ENCODE measurements at regions of chr7 and their contacts with region 1.

Region 1: DNA sequence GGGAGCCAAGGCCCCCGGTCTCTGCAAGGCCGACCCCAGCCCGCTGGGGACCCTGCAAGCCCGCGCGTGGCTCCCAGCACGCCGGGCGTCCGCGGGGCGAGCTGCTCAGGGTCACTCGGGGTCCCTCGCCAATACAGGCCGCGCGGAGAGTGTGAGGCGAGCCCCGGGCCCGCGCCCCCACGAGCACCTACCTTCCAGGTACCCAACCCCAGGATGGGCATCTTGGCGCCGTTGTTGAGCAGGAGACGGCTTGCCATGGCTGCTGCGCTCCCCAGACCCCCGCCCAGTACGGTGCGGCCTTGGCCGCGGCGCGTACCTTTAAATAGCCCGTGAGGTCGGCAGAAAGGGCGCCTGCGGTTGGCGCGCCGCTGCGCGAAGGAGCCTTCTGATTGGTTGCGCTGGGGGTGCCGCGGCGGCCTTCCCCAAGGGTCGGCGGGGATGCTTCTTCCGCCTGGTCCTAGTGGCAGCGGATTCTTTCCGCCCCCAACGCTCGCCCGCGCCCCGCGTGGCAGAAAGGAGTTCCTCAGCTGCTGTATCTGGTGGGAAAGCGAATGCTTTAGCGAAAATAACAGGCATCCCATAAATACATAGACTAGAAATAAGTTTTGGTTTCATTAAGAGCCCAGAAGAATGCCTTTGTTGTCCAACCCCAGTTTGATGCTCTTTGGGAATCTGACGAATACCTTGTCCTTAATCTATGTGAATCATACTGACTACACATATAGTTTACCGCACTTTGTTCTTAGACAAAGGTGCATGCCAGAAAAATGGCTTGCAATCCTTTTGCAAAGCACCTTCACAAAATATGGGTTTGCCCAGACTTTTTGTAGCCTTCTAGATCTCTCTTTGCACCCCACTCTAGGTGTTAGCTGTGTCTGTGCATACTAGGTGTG is at the start of gene AKR1B1:
- DNase-seq: peak; percentile 64
- ATAC-seq: peak; percentile 97
- H3K4me3 ChIP-seq: peak within 1 kb of the TSS; percentile 75
- H3K27ac ChIP-seq: peak within 1 kb of the TSS; percentile 79
- H3K4me1 ChIP-seq: peaks cover 9% of the 10 kb centered on the region; the same call in 1 of the 2 replicates
- H3K27me3 ChIP-seq: no peaks in the 10 kb centered on the region
- CTCF ChIP-seq: peak; percentile 58 to 81 (median 78)
- EP300 ChIP-seq: no peak
- POLR2A ChIP-seq: peak; percentile 81
- RAD21 ChIP-seq: no peak
- polyA plus RNA-seq, gene AKR1B1: 165 to 180 TPM

Region 2: DNA sequence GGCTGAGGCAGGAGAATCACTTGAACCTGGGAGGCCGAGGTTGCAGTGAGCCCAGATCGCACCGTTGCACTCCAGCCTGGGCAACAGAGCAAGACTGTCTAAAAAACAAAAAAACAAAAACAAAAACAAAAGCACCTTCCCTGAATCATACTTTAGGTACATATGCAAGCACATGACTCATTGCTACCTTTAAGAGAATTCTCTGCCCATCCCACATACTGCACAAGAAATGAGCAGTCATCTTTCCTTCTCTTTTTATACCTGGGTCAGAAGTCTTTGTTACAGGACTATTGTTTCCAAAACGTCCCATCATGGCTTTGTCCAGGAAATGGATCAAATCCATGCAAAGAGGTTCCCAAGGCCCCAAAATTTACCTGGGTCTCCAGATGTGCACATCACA is 46.8 kb after region 1 on chr7:
- CTCF ChIA-PET with region 1: interaction called, 10 read pairs
- POLR2A ChIA-PET with region 1: no interaction called
- RAD21 ChIA-PET with region 1: no interaction called
- SMC1A ChIA-PET with region 1: no interaction called
- in situ Hi-C with region 1: no loop called
- intact Hi-C with region 1: no loop called
- DNase-seq: no peak
- ATAC-seq: no peak
- H3K4me3 ChIP-seq: no peak overlapping the region
- H3K27ac ChIP-seq: no peak overlapping the region
- H3K4me1 ChIP-seq: no peaks in the 10 kb centered on the region
- H3K27me3 ChIP-seq: no peaks in the 10 kb centered on the region; a peak in 1 of 4 replicates
- CTCF ChIP-seq: no peak
- EP300 ChIP-seq: no peak
- POLR2A ChIP-seq: no peak
- RAD21 ChIP-seq: no peak

Region 3: DNA sequence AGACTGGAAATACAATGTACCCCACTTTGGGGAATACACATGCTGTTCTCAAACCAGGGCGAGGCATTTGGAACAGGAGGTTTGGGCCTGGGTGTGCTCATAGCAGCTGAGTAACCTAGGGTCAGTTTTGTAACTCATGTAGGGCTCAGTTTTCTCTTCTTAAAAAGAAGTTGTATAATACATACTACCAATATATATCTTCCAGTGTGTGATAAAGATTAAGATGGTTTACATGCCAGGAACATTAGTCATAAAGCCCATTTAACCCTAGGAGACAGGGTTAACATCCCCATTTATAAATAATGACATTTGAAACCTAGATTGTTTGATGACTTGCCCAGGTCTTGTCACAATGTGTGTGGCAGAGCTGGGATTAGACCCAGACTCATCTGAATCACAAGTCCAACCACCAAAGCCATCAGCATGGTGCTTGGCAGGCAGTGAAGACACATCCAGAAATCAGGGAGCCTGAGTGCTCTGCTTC is 74.3 kb after region 1 on chr7:
- CTCF ChIA-PET with region 1: no interaction called
- POLR2A ChIA-PET with region 1: no interaction called
- RAD21 ChIA-PET with region 1: no interaction called
- SMC1A ChIA-PET with region 1: no interaction called
- in situ Hi-C with region 1: no loop called
- intact Hi-C with region 1: no loop called
- DNase-seq: no peak
- ATAC-seq: no peak
- H3K4me3 ChIP-seq: no peak overlapping the region
- H3K27ac ChIP-seq: no peak overlapping the region
- H3K4me1 ChIP-seq: no peaks in the 10 kb centered on the region
- H3K27me3 ChIP-seq: peaks cover 2% of the 10 kb centered on the region in 2 experiments; a peak in 2 of 4 replicates
- CTCF ChIP-seq: no peak
- EP300 ChIP-seq: no peak
- POLR2A ChIP-seq: no peak
- RAD21 ChIP-seq: no peak

Region 4: DNA sequence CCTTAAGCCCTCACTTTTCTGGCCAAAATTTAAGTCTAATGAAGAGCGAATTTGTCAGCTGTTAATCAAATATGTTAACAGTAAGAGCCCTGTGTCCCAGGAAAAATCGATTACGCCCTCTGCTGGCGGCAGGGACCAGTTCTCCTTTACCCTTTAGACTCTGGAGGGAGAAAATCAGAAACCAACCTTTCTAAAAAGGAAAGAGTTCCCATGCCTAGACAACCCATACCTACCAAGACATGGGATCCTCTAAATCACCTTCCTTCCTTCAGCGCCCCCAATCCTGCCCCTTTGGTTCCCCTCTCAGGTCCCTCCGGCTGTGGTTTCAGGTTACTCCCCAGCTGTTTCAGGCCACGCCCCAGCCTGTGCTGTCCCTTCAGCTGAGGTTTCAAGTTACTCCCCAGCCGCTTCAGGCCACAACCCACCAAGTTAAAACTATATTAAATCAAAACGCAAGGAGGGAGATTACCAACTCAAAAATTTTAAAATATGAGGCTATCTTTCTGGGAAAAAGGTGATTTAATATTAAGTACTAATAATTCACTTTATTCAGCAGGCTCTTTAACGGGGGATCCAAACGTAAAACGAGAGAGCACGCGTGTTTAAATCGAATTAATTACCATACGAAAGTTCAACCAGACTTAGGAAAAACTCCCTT is 88.5 kb after region 1 on chr7:
- CTCF ChIA-PET with region 1: interaction called, 11 read pairs
- POLR2A ChIA-PET with region 1: no interaction called
- RAD21 ChIA-PET with region 1: no interaction called
- SMC1A ChIA-PET with region 1: interaction called, 5 read pairs
- in situ Hi-C with region 1: no loop called
- intact Hi-C with region 1: no loop called
- DNase-seq: peak; percentile 39
- ATAC-seq: peak; percentile 87
- H3K4me3 ChIP-seq: no peak overlapping the region; the same call in 1 of the 2 replicates
- H3K27ac ChIP-seq: no peak overlapping the region
- H3K4me1 ChIP-seq: peaks cover 21% of the 10 kb centered on the region
- H3K27me3 ChIP-seq: no peaks in the 10 kb centered on the region
- CTCF ChIP-seq: peak; percentile 72 to 87 (median 74)
- EP300 ChIP-seq: no peak
- POLR2A ChIP-seq: no peak
- RAD21 ChIP-seq: peak; percentile 34; the same call in 1 of the 2 replicates